ENCODE measurements at regions of chr15 and their contacts with region 1.

Region 1: DNA sequence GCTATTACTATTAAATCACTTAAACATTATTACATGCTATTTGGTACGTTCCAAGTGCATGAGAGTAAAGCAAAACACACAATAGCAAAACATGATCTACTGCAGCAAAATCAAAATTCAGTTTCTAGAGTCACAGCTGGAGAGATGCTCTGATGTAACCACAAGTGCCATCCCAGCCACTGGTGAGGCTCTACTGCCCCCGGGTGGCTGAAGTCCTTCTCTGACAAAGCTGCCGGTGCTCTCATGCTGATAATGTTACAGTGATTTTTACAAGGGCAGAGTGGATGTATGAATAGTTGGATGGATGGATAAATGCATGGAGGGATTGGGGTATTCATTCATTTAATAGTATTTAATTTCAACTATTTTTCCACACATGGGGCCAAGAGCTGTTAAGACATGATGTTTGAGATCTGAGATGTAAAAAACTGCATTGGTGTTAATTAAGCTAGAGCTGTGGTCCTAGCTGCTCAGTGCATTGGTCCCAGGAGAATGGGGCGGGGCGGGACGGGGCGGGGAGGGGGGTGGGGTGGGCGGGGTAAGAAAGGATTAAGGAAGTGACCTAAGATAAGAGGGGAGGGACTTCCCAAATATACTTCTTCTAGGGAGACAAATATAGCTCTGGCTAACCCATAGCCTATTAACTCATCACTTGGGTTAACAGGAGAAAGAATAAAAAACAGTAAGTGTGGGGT is 5.3 kb upstream of the SPESP1 start:
- DNase-seq: peak; percentile 75 to 92 (median 84)
- H3K4me3 ChIP-seq: peak overlapping the region in 2 of 59 donors; percentile 10 to 25
- H3K27ac ChIP-seq: peak overlapping the region in 1 of 59 donors; percentile 5
- H3K27me3 ChIP-seq: no peaks in the 10 kb centered on the region
- CTCF ChIP-seq: peak; percentile 46 to 93 (median 84)

Region 2: DNA sequence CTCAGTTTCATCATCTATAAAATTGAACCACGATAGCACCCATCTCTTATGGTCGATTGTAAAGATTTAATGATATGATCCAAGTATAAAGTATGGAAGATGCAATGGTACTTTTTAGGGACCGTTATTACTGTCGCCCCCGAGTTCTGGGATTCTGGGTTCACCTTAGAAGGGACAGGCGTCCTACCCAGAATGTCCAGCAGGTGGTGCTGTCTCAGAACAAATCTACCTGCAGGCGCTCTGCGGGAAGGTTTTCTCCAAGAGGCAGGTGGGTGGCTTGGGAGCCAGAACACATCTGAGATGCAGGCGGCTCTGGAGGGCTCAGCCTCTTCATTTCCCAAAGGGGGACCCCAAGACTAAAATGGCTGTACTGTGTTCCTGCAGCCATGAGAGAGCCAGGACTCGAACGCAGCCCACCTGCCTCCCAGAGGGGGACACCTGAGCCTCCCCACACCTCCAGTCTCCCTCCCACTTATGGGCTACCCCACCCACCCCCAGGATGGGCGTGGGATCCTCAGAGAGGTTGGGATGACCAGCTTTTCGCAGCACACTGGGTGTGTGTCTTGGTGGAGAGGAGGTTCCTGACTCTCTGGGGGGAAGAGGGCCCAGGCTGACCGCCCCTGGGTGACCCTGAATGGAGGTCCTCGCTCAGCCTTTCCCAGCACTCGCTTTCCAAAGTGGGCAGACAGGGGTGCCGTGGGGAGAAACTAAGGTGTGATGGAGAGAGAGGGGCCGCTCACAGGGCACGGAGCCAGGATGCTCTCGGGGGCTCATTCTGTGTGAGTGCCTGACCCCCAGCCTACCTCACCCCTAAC is 374.3 kb before region 1 on chr15:
- intact Hi-C with region 1: loop called (anchors 1 to 5 kb)
- DNase-seq: peak; percentile 76 to 91 (median 84)
- H3K4me3 ChIP-seq: no peak overlapping the region
- H3K27ac ChIP-seq: no peak overlapping the region
- H3K27me3 ChIP-seq: no peaks in the 10 kb centered on the region
- CTCF ChIP-seq: peak; percentile 82 to 99 (median 97)

Region 3: GRCh38 chr15:68631601-68632051 is 293.4 kb before region 1 on chr15:
- intact Hi-C with region 1: no loop called
- DNase-seq: peak in 1 of 10 donors; percentile 51
- H3K4me3 ChIP-seq: no peak overlapping the region
- H3K27ac ChIP-seq: peak overlapping the region in 32 of 59 donors; percentile 0 to 64 (median 38)
- H3K27me3 ChIP-seq: no peaks in the 10 kb centered on the region
- CTCF ChIP-seq: peak in 3 of 56 donors; percentile 4 to 13 (median 8)

Region 4: GRCh38 chr15:68948951-68949526 is 24.0 kb after region 1 on chr15:
- intact Hi-C with region 1: no loop called
- DNase-seq: no peak
- H3K4me3 ChIP-seq: no peak overlapping the region
- H3K27ac ChIP-seq: no peak overlapping the region
- H3K27me3 ChIP-seq: peaks cover 0 to 7% (median 0%) of the 10 kb centered on the region in 45 donors
- CTCF ChIP-seq: no peak

Measured in dorsolateral prefrontal cortex (tissue), 120 donors.